Activated CD4-positive, alpha-beta T cell treated with anti-CD3 and anti-CD28 coated beads, Interleukin-2, amount 10 ng/mL, durations not matched to agents 24 days and 14 days (primary cell): ENCODE measurements at regions of chr12 and their contacts with region 1.

Region 1: DNA sequence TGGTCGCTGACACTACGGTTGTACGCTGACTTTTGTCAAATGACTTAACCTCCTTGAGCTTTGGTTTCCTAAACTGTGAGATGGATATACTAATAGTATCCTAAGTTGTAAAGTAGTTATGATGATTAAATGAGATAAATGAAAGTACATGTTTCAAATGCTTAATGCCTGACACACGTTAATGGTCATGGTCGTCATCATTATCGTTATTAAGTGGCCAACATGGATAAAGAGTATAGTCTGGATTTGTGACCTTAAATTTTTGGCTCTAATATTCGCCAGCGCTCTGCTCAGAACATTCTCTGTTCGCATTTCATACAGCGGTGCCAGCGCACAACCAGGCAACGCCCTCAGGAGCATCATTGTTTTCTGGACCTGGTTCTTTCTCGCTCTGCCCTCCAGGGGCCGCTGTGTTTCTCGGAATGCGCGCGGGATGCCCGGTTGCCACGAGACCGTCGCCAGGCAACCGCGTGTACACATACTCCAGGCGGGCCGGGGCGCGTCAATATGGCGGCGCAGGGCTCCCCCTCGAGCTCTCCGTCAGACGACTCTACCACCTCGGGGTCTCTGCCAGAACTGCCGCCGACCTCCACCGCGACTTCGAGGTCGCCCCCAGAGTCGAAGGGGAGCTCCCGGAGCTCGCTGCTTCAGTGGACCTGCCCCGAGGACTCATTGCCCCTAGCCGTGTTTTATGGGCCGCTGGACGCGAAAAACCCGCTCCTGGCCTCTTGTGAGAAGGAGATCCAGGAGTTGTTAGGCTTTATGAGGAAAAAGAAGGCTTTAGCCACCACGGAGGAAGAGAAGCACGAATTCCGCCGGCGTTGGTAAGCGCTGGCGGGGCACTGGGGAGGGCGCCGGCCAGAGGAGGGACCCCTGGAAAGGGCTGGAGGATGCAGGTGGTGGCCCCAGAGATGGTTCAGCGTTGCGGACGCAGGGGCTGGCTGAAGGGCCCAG is at the start of gene CFAP54:
- DNase-seq: peak; percentile 98
- H3K4me3 Mint-ChIP-seq: peak within 1 kb of the TSS; percentile 88
- H3K27ac Mint-ChIP-seq: peak within 1 kb of the TSS; percentile 81
- H3K4me1 Mint-ChIP-seq: peaks cover 32% of the 10 kb centered on the region
- H3K27me3 Mint-ChIP-seq: peaks cover 23% of the 10 kb centered on the region
- total RNA-seq, gene CFAP54: 0.09 TPM in 2 replicates

Region 2: GRCh38 chr12:95942524-95943329 is 546.7 kb before region 1 on chr12 and contains the start of gene CCDC38:
- intact Hi-C with region 1: loop called (anchors 2 kb)
- DNase-seq: peak; percentile 94
- H3K4me3 Mint-ChIP-seq: peak within 1 kb of the TSS; percentile 94
- H3K27ac Mint-ChIP-seq: peak within 1 kb of the TSS; percentile 90
- H3K4me1 Mint-ChIP-seq: peaks cover 8% of the 10 kb centered on the region
- H3K27me3 Mint-ChIP-seq: peaks cover 18% of the 10 kb centered on the region
- total RNA-seq, gene CCDC38: not detected in 2 replicates

Region 3: DNA sequence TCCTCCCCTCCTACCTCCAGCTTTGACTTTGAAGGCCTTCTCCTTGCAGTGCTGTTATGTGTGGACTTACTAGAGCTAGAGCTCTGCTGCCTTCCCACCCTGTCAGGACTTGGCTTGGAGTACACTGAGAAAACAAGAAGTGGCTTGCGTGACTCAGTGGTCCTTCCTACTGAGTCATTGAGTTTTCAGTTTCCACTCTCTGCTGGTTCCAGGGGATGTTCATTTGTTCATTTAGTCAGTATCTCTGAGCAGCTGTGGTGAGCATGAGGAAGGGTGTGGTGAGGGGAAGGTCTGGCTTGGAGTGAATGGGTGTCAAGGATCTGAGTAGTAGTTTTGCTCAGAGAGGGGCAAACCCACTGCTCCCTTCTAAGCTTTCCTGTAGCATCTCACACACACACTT is 312.4 kb before region 1 on chr12:
- intact Hi-C with region 1: loop called (anchors 5 kb)
- DNase-seq: peak; percentile 87
- H3K4me3 Mint-ChIP-seq: peak overlapping the region; percentile 36
- H3K27ac Mint-ChIP-seq: peak overlapping the region; percentile 90
- H3K4me1 Mint-ChIP-seq: peaks cover 12% of the 10 kb centered on the region
- H3K27me3 Mint-ChIP-seq: no peaks in the 10 kb centered on the region

Region 4: GRCh38 chr12:96208801-96209549 is 280.4 kb before region 1 on chr12:
- intact Hi-C with region 1: no loop called
- DNase-seq: no peak
- H3K4me3 Mint-ChIP-seq: peak overlapping the region; percentile 86
- H3K27ac Mint-ChIP-seq: peak overlapping the region; percentile 65
- H3K4me1 Mint-ChIP-seq: peaks cover 87% of the 10 kb centered on the region
- H3K27me3 Mint-ChIP-seq: no peaks in the 10 kb centered on the region

Region 5: GRCh38 chr12:96335270-96335669 is 154.1 kb before region 1 on chr12:
- intact Hi-C with region 1: loop called (anchors 5 kb)
- DNase-seq: no peak
- H3K4me3 Mint-ChIP-seq: peak overlapping the region; percentile 51
- H3K27ac Mint-ChIP-seq: peak overlapping the region; percentile 12
- H3K4me1 Mint-ChIP-seq: peaks cover 29% of the 10 kb centered on the region
- H3K27me3 Mint-ChIP-seq: no peaks in the 10 kb centered on the region

Region 6: GRCh38 chr12:96434107-96434506 is 55.3 kb before region 1 on chr12:
- intact Hi-C with region 1: loop called (anchors 1 kb)
- DNase-seq: peak; percentile 93
- H3K4me3 Mint-ChIP-seq: peak overlapping the region; percentile 48
- H3K27ac Mint-ChIP-seq: peak overlapping the region; percentile 62
- H3K4me1 Mint-ChIP-seq: peaks cover 31% of the 10 kb centered on the region
- H3K27me3 Mint-ChIP-seq: no peaks in the 10 kb centered on the region

Region 7: GRCh38 chr12:96516472-96517430 is 27.4 kb after region 1 on chr12:
- intact Hi-C with region 1: loop called (anchors 1 kb)
- DNase-seq: peak; percentile 95
- H3K4me3 Mint-ChIP-seq: peak overlapping the region; percentile 52
- H3K27ac Mint-ChIP-seq: peak overlapping the region; percentile 68
- H3K4me1 Mint-ChIP-seq: peaks cover 14% of the 10 kb centered on the region
- H3K27me3 Mint-ChIP-seq: no peaks in the 10 kb centered on the region